Endothelial cell of umbilical vein (primary cell): ENCODE measurements at regions of chr1 and their contacts with region 1.

Region 1: DNA sequence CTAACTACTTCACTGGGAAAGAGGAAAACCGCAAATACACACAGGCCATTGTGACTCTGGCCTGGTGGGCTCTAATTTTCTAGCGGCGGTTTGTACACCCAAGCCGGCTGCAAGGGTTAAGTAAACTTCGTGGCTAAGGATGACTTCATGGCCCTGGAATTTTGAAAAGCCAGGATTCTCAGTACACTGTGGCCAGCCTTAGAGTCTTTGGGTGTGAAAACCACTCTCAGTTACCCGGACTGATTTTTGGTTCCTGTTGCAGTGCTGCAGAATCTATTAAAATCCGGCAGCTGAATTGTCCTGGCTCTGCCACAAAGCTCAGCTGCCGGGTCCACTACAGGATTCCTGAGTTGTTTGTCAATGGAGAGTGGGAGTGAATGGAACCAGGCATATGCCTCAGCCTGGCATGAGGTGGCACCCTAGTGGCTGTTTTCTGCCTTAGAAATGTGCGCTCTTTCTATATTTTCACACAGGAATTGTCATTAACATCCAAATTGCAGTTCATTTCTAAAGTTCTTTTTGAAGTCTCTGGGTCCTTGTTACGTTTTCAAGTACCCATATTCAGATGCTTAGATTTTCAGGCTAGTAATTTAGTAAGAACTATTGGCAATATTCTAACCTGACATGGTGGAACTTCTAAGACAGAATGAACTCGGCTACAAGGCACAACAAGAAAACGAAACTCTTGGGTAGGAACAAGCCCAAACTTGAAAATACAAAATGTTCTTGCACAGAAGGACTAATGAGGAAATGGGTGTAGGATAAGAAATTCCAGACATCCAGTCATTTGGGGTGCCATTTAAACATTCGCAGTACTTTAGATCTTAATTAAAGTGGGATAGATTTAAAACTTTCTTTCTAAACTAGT is 255.9 kb downstream of the NFIA start:
- DNase-seq: peak; percentile 93
- H3K4me3 ChIP-seq: peak overlapping the region in 1 of 3 experiments; percentile 49
- H3K27ac ChIP-seq: peak overlapping the region; percentile 93
- H3K4me1 ChIP-seq: peaks cover 27% of the 10 kb centered on the region
- H3K27me3 ChIP-seq: no peaks in the 10 kb centered on the region
- CTCF ChIP-seq: peak; percentile 71 to 77
- POLR2A ChIP-seq: no peak

Region 2: DNA sequence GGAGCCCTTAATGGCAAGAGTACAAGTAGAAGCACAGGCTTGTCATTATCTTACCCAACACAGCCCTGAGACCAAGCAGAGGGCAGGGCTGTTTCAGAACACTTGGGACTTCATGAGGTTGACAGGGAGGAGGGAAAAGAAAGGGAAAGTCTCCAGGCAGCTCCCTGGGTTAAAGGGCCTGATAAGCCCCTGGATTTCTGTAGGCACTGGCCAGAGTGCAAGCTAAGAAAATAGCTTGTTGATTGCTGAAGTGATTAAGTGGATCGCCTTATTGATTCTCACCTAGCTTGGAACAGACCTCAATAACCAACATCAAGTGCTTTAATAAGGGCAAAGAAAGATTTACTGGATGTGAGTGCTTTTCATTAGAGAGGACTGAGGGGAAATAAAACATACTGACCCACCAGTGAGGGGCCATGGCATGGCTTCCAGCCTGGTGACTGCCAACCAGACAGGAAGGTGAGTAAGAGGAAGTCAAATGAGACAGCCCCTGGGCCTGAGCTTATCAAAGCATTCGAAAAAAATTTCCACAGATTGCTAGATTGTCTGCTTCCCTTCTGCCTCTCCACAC is 377.2 kb before region 1 on chr1:
- CTCF ChIA-PET with region 1: no interaction called
- POLR2A ChIA-PET with region 1: no interaction called
- dilution Hi-C with region 1: no loop called
- intact Hi-C with region 1: loop called (anchors 5 kb)
- DNase-seq: peak; percentile 96
- H3K4me3 ChIP-seq: no peak overlapping the region
- H3K27ac ChIP-seq: peak overlapping the region; percentile 98
- H3K4me1 ChIP-seq: peaks cover 68% of the 10 kb centered on the region
- H3K27me3 ChIP-seq: no peaks in the 10 kb centered on the region
- CTCF ChIP-seq: no peak
- POLR2A ChIP-seq: no peak

Region 3: DNA sequence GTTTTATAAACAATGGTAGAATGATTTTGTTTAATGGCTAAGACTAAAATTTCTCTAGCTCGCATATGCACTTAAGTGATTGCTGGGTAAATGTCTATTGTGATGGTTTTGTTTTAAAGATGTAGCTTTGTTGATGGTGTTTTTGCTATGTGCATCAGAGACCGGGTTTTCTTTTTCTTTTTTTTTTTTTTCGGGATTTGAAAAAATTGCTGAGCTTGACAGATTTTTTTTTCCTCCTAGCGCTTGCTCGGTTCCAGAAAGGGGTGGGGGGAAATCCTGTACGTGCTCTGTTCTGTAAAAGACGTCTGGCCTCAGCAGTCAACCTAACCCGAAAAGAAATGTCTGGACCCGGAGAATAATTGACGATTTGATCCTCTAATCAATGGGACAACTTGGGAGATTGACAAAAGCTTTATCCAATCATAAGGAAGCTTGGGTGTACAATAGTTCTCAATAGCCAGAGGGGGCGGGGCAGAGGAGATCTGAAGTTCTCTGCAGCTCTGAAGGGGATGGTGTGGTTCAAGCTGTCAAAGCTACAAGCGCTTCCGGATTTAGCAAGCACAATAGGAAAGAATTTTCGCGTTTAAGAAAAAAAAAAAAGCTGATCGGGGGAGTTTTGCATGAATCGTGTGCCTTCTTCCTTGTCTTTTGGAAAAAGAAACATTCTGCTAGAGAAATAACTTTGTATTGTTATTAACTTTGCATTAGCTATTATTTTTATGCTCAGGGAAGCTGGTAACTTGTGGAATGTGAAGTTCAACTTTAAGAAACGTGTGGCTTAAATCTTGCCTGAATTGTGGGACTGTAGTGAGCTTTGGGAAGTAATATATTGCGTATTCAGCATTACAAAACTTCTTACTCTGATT is 260.3 kb before region 1 on chr1:
- CTCF ChIA-PET with region 1: interaction called, 7 read pairs
- POLR2A ChIA-PET with region 1: interaction called, 8 read pairs
- dilution Hi-C with region 1: no loop called
- intact Hi-C with region 1: loop called (anchors 1 kb)
- DNase-seq: peak; percentile 100
- H3K4me3 ChIP-seq: peak overlapping the region; percentile 44 to 97 (median 77)
- H3K27ac ChIP-seq: peak overlapping the region; percentile 45
- H3K4me1 ChIP-seq: peaks cover 41% of the 10 kb centered on the region
- H3K27me3 ChIP-seq: no peaks in the 10 kb centered on the region
- CTCF ChIP-seq: no peak
- POLR2A ChIP-seq: peak; percentile 10

Region 4: DNA sequence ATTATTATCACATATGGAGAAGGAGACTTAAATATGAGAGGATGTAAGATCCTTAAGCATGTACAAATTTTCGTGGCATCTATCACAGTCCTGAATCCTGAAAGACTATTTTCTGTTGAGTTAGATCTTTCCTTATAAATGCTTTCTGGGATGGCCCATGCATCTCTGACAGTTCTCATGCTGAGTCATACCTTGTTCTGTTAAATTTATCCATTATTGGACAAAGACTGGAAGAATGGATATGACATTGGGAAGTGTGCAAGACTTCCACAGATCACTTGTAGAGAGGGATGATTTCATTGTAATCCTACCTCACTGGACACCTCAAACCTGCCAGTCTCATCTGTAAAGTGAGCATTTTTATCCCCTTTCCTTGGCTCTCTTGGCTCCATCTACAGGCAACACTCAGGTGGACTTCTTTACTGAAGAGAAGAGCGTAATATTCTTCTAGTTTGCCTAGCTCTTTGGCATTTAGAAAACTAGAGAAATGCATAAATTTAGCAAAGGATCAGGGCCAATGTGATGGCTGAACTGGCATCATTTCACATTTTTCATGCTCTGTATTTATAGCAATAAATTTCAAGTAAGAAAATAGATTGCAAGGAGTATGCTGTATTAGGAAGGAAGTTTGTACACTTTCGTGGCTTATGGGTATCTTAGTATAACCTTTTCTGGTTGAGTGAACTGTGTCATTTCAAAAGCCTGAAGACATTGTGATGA is 127.6 kb before region 1 on chr1:
- CTCF ChIA-PET with region 1: no interaction called
- POLR2A ChIA-PET with region 1: no interaction called
- dilution Hi-C with region 1: no loop called
- intact Hi-C with region 1: loop called (anchors 10 kb)
- DNase-seq: no peak
- H3K4me3 ChIP-seq: no peak overlapping the region
- H3K27ac ChIP-seq: no peak overlapping the region
- H3K4me1 ChIP-seq: no peaks in the 10 kb centered on the region
- H3K27me3 ChIP-seq: no peaks in the 10 kb centered on the region
- CTCF ChIP-seq: no peak
- POLR2A ChIP-seq: no peak

Region 5: DNA sequence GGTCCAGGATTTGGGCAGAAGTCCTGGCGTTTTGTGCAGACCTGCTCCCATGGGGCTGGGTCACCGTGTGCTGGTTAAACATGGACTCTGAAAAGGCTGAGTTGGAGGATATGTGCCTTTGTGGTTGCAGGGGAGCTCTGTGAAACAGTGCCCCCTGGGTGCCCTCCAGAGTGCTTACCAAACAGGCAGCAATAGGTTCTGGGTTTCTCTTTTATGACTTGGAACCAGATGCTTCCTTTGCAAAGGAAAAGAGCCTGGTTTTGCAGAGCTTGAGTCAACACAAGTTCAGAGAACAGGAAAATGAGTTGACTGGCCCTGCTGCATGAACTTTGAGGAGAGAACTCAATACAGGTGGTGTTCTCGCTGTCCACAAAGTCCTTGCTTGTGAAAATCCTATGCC is 97.8 kb after region 1 on chr1:
- CTCF ChIA-PET with region 1: interaction called, 14 read pairs
- POLR2A ChIA-PET with region 1: no interaction called
- dilution Hi-C with region 1: no loop called
- intact Hi-C with region 1: loop called (anchors 1 kb)
- DNase-seq: peak; percentile 98
- H3K4me3 ChIP-seq: no peak overlapping the region
- H3K27ac ChIP-seq: peak overlapping the region; percentile 94
- H3K4me1 ChIP-seq: peaks cover 42% of the 10 kb centered on the region
- H3K27me3 ChIP-seq: no peaks in the 10 kb centered on the region
- CTCF ChIP-seq: peak; percentile 80 to 81
- POLR2A ChIP-seq: peak; percentile 67

Region 6: DNA sequence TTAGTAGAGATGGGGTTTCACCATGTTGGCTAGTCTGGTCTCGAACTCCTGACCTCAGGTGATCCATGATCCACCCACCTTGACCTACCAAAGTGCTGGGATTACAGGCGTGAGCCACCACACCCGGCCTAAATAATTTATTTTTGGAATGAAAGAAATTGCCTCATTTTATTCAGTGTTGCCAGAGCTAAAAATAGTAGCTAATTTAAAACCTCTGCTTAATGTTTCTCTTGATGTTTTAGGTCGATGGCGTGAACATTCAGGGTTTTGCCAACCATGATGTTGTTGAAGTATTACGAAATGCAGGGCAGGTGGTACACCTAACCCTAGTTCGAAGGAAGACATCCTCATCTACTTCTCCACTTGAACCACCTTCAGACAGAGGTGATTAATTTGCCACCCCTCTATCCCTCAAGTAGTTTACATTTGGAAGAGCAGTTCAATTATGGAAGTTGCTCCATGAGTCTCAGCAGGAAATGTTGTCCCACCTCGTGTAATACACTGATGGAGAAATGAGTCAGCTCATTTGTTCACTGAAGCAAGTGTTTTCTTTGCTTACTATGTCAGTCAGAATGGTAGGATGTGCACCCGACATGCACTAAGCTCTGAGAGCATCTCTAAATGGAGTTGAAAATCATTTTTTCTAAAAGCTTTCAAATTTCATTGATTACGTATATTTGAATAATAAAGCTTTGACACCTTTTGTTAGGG is 459.0 kb after region 1 on chr1:
- CTCF ChIA-PET with region 1: no interaction called
- POLR2A ChIA-PET with region 1: no interaction called
- dilution Hi-C with region 1: no loop called
- intact Hi-C with region 1: no loop called
- DNase-seq: no peak
- H3K4me3 ChIP-seq: no peak overlapping the region
- H3K27ac ChIP-seq: no peak overlapping the region
- H3K4me1 ChIP-seq: peaks cover 2% of the 10 kb centered on the region
- H3K27me3 ChIP-seq: no peaks in the 10 kb centered on the region
- CTCF ChIP-seq: no peak
- POLR2A ChIP-seq: no peak

Region 7: GRCh38 chr1:61851849-61852669 is 513.8 kb after region 1 on chr1:
- CTCF ChIA-PET with region 1: interaction called, 6 read pairs
- POLR2A ChIA-PET with region 1: no interaction called
- dilution Hi-C with region 1: no loop called
- intact Hi-C with region 1: loop called (anchors 1 kb)
- DNase-seq: peak; percentile 74
- H3K4me3 ChIP-seq: no peak overlapping the region
- H3K27ac ChIP-seq: peak overlapping the region; percentile 45
- H3K4me1 ChIP-seq: peaks cover 14% of the 10 kb centered on the region
- H3K27me3 ChIP-seq: no peaks in the 10 kb centered on the region
- CTCF ChIP-seq: peak; percentile 40 to 58
- POLR2A ChIP-seq: no peak